HepG2 (cell line): ENCODE measurements at regions of chr18 and their contacts with region 1.

Region 1: DNA sequence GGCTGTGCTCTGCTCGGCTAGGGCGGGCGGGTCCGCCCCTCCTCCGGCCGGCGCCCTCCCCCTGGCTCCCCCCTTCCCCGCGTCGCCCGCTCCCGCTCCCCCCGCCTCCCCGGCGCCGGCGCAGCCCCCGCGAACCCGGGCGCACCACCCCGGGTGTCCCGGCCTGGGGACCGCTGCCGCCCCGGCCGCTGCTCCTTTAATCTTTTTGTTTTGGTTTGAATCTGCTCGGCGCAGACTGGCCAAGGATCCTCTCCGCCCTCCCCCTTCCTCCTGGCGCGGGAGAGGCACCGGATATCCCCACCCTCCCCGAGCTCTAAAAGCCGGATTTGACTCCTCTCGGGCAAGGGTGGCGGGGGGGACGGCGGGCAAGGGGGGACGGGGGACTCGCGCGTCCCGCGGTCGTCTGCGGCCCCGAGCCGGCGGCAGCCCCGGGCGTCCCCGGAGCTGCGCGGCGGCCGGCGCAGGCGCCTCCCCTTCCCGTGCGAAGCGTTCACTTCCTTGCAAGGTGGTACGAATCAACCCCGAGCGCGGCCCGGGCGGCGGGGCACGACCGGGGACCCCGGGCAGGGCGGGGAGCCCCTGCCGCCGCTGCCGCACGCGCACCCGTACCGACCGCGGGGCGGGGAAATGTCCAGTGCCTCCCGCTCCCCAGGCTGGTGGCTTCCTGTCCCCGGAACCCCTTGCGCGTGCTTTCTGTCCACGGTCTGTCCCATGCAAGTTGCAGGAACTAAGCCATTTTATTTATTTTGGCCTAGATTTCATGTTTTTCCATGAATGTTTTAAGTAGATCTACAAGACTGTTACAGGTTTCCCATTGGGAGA is at the start of gene PTGR3:
- DNase-seq: peak; percentile 86
- ATAC-seq: peak; percentile 59
- H3K4me3 ChIP-seq: peak within 1 kb of the TSS; percentile 92 to 97 (median 95)
- H3K27ac ChIP-seq: peak within 1 kb of the TSS; percentile 96
- H3K4me1 ChIP-seq: peaks cover 43% of the 10 kb centered on the region
- H3K27me3 ChIP-seq: no peaks in the 10 kb centered on the region; a peak in 2 of 5 replicates
- CTCF ChIP-seq: no peak
- EP300 ChIP-seq: no peak
- POLR2A ChIP-seq: peak; percentile 58 to 65
- RAD21 ChIP-seq: peak; percentile 33; the same call in 1 of the 2 replicates
- total RNA-seq, gene PTGR3: 11.5 and 13.3 TPM in 2 replicates

Region 2: DNA sequence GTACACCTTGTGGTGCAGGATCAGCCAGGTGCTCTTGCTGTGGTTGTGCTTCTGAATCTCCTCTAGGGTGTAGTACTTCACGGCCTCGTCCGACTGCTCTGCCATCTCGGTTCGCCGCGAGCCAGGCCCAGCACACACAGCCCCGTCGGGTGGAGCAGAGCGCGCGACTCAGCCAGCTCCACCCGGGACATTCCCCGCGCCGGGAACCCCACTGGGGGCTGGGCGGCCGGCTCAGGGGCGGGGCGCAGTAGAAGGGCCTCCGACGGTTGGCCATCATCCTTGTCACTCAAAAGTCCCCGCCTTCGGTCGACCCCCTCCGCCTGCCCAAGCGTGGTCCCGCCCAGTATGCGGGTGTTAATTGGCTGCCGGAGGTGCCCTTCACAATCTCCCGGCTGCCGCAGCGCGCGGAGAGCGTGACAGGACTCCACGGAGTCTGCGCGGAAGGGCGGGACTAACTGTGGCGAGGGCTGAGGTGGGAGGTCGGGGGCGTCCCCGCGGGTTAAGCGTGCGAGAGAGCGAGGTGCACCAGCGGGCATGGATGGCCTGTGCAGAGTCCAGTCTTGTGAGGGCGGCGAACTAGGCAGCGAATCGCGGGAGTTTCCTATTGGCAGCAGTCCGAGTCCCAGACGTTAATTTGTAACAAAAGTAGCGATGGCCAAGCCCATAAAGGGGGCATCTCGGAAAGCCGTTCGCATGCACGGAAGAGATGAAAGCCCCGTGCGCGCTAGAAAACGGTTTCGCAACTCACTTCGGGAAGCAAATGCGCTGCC is 917.4 kb before region 1 on chr18 and contains the start of gene CYB5A:
- CTCF ChIA-PET with region 1: no interaction called
- POLR2A ChIA-PET with region 1: no interaction called
- in situ Hi-C with region 1: loop called (anchors 25 kb)
- intact Hi-C with region 1: no loop called
- DNase-seq: peak; percentile 98
- ATAC-seq: peak; percentile 93
- H3K4me3 ChIP-seq: peak within 1 kb of the TSS; percentile 82 to 94 (median 91)
- H3K27ac ChIP-seq: peak within 1 kb of the TSS; percentile 94
- H3K4me1 ChIP-seq: peaks cover 50% of the 10 kb centered on the region
- H3K27me3 ChIP-seq: no peaks in the 10 kb centered on the region; a peak in 1 of 5 replicates
- CTCF ChIP-seq: peak; percentile 13; the same call in 1 of the 2 replicates
- EP300 ChIP-seq: peak; percentile 26 to 74; a peak in 2 of 4 replicates
- POLR2A ChIP-seq: peak; percentile 60 to 72
- RAD21 ChIP-seq: 0 out of 2 replicates have a peak, but pooled peaks have one; percentile 32
- total RNA-seq, gene CYB5A: 356 and 411 TPM in 2 replicates

Region 3: GRCh38 chr18:74597662-74598349 is 611.5 kb before region 1 on chr18 and contains the start of gene ZNF407:
- CTCF ChIA-PET with region 1: no interaction called
- POLR2A ChIA-PET with region 1: no interaction called
- in situ Hi-C with region 1: no loop called
- intact Hi-C with region 1: loop called (anchors 5 kb)
- DNase-seq: peak; percentile 90
- ATAC-seq: peak; percentile 88
- H3K4me3 ChIP-seq: peak within 1 kb of the TSS; percentile 81 to 91 (median 90)
- H3K27ac ChIP-seq: peak within 1 kb of the TSS; percentile 85
- H3K4me1 ChIP-seq: peaks cover 26% of the 10 kb centered on the region
- H3K27me3 ChIP-seq: no peaks in the 10 kb centered on the region; a peak in 1 of 5 replicates
- CTCF ChIP-seq: no peak
- EP300 ChIP-seq: no peak
- POLR2A ChIP-seq: peak; percentile 48 to 74; a peak in 3 of 4 replicates
- RAD21 ChIP-seq: 0 out of 2 replicates have a peak, but pooled peaks have one; percentile 2
- total RNA-seq, gene ZNF407: 8.3 and 8.7 TPM in 2 replicates

Region 4: GRCh38 chr18:75161256-75162028 is 47.9 kb before region 1 on chr18:
- CTCF ChIA-PET with region 1: no interaction called
- POLR2A ChIA-PET with region 1: interaction called, 3 read pairs
- in situ Hi-C with region 1: no loop called
- intact Hi-C with region 1: loop called (anchors 5 kb)
- DNase-seq: peak; percentile 77
- ATAC-seq: peak; percentile 96
- H3K4me3 ChIP-seq: peak overlapping the region; percentile 53 to 80 (median 61)
- H3K27ac ChIP-seq: no peak overlapping the region
- H3K4me1 ChIP-seq: peaks cover 13% of the 10 kb centered on the region
- H3K27me3 ChIP-seq: peaks cover 0 to 17% of the 10 kb centered on the region in 2 experiments; a peak in 4 of 5 replicates
- CTCF ChIP-seq: peak; percentile 64
- EP300 ChIP-seq: no peak
- POLR2A ChIP-seq: no peak
- RAD21 ChIP-seq: no peak

Region 5: DNA sequence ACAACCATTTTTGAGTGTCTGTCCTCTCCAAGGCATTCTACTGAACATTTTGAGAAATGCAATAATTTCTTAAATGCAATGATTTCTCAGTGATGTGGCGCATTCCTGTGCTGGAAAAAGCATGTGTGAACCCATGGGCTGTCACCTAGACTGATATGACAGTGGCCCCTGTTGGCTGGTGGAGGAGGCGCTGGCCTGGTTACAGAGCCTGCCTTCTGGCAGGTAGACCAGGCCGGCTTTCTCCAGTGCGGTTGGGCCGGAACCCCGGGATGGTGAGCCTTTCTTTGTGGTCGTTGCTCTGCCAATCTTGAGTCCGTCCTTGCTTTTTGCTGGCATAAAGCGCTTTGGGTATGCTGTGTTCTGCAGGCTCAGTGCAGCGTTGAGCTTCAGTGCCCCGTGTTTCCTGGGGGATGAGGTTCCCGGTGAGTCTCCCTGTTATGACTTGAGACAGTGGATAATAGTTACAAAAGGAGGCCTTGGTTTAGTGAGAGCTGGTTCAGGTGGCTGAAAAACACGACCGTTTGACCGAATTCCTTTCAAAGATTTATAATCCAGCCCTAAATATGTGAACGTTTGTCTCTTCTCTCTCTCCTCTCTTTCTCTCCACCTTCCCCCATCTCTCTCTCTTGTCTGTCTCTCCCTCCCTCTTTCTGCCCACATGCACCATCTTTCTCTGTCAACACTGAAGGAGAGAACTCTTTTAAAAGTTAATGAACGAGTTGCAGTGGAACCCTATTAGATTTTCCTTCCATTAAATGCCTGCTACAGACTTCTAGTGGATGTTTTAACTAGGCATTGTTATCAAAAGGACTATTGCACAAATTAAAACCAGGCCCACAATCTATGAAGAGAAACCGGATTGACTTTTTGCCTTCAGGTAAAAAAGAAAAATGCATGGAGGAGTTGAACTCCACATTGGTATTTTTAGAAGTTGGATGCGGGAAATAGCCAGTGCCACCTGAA is 35.3 kb after region 1 on chr18:
- CTCF ChIA-PET with region 1: no interaction called
- POLR2A ChIA-PET with region 1: interaction called, 3 read pairs
- in situ Hi-C with region 1: no loop called
- intact Hi-C with region 1: loop called (anchors 2 kb)
- DNase-seq: peak; percentile 21
- ATAC-seq: peak; percentile 91
- H3K4me3 ChIP-seq: no peak overlapping the region
- H3K27ac ChIP-seq: no peak overlapping the region
- H3K4me1 ChIP-seq: peaks cover 18% of the 10 kb centered on the region
- H3K27me3 ChIP-seq: no peaks in the 10 kb centered on the region
- CTCF ChIP-seq: peak; percentile 72
- EP300 ChIP-seq: no peak
- POLR2A ChIP-seq: no peak
- RAD21 ChIP-seq: peak; percentile 60

Region 6: DNA sequence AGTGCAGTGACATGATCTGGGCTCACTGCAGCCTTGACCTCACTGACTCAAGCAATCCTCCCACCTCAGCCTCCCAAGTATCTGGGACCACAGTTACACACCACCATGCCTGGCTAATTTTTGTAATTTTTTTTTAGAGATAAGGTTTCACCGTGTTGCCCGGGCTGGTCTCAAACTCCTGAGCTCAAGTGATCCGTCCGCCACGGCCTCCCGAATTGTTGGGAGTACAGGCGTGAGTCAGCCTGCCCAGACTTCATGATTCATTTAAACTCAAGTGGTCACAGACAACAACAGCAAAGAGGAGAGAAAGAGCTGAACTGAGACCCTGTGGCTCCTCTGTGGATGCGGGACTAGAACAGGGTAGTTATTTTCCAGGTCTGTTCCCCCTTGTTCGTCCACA is 84.3 kb after region 1 on chr18:
- CTCF ChIA-PET with region 1: no interaction called
- POLR2A ChIA-PET with region 1: no interaction called
- in situ Hi-C with region 1: no loop called
- intact Hi-C with region 1: loop called (anchors 5 kb)
- DNase-seq: no peak
- ATAC-seq: no peak
- H3K4me3 ChIP-seq: no peak overlapping the region
- H3K27ac ChIP-seq: no peak overlapping the region
- H3K4me1 ChIP-seq: peaks cover 21% of the 10 kb centered on the region
- H3K27me3 ChIP-seq: no peaks in the 10 kb centered on the region
- CTCF ChIP-seq: no peak
- EP300 ChIP-seq: no peak
- POLR2A ChIP-seq: no peak
- RAD21 ChIP-seq: no peak